PC-3 (cell line): ENCODE measurements at regions of chr7 and their contacts with region 1.

Region 1: GRCh38 chr7:157412021-157412443 is 75.2 kb downstream of the DNAJB6 start:
- DNase-seq: peak; percentile 95
- ATAC-seq: peak; percentile 82
- H3K4me3 ChIP-seq: peak overlapping the region; percentile 24; the same call in 1 of the 2 replicates
- H3K27ac ChIP-seq: peak overlapping the region; percentile 99
- H3K4me1 ChIP-seq: peaks cover 33% of the 10 kb centered on the region
- H3K27me3 ChIP-seq: no peaks in the 10 kb centered on the region
- CTCF ChIP-seq: no peak

Region 2: DNA sequence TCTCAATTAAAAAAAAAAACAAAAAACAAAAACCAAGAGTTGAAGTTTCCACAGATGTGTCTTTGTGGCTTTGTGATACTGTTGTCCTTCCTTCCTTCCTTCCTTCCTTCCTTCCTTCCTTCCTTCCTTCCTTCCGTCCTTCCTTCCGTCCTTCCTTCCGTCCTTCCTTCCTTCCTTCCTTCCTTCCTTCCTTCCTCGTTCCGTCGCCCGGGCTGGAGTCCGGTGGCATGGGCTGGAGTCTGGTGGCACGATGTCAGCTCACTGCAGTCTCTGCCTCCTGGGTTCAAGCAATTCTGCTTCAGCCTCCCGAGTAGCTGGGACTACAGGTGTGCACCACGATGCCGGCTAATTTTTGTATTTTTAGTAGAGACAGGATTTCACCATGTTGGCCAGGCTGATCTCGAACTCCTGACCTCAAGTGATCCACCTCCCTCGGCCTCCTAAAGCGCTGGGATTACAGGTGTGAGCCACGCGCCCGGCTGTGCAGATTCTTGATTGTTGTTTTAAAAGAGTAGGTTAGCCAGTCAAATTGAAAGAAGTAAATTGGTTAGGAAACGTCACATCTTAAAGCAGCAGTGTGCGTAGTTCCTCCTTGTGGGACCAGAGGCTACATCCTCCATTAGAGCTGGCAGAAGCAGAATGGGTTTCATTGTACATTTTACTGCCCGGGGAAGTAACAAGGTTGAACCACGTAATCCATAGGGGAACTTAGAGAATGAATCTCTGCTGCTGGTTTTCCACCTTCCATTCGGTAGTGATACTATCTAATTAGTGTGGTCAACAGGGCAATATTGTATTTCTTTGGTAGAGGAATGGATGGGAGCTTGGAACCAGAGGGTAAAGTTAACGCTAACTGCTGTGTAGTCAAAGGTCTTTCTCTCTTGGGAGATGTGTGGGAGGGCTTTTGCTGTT is 54.6 kb before region 1 on chr7:
- CTCF ChIA-PET with region 1: no interaction called
- POLR2A ChIA-PET with region 1: no interaction called
- intact Hi-C with region 1: no loop called
- DNase-seq: no peak
- ATAC-seq: no peak
- H3K4me3 ChIP-seq: no peak overlapping the region
- H3K27ac ChIP-seq: no peak overlapping the region
- H3K4me1 ChIP-seq: peaks cover 13% of the 10 kb centered on the region
- H3K27me3 ChIP-seq: no peaks in the 10 kb centered on the region
- CTCF ChIP-seq: no peak

Region 3: DNA sequence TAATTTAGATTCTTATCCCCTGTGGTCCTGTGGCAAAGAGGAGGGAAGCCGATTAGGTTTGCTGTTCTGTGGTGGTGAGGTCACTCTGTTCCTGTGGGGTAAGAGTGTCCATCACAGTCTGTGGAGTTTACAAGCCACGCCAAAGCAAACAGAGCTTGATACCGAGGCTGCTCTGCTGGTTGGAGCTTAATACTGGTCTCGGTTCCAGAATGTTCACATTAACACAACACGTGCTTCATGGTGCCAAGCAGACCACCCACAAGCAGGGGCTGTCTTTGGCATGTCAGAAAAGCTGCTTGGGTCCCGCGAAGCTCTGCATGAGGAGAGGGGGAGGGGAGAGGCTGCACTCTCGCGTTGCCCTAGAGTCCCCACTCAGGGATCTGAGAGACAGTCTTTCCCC is 27.7 kb before region 1 on chr7:
- CTCF ChIA-PET with region 1: no interaction called
- POLR2A ChIA-PET with region 1: no interaction called
- intact Hi-C with region 1: loop called (anchors 1 kb)
- DNase-seq: peak; percentile 74
- ATAC-seq: peak; percentile 96
- H3K4me3 ChIP-seq: no peak overlapping the region
- H3K27ac ChIP-seq: peak overlapping the region; percentile 85
- H3K4me1 ChIP-seq: peaks cover 30% of the 10 kb centered on the region
- H3K27me3 ChIP-seq: no peaks in the 10 kb centered on the region
- CTCF ChIP-seq: no peak

Region 4: GRCh38 chr7:157397731-157398691 is 14.0 kb before region 1 on chr7:
- CTCF ChIA-PET with region 1: no interaction called
- POLR2A ChIA-PET with region 1: no interaction called
- intact Hi-C with region 1: loop called (anchors 1 kb)
- DNase-seq: peak; percentile 65
- ATAC-seq: peak; percentile 72
- H3K4me3 ChIP-seq: no peak overlapping the region
- H3K27ac ChIP-seq: peak overlapping the region; percentile 38
- H3K4me1 ChIP-seq: peaks cover 25% of the 10 kb centered on the region
- H3K27me3 ChIP-seq: no peaks in the 10 kb centered on the region
- CTCF ChIP-seq: peak; percentile 65

Region 5: GRCh38 chr7:157555313-157555712 is 143.3 kb after region 1 on chr7:
- CTCF ChIA-PET with region 1: no interaction called
- POLR2A ChIA-PET with region 1: no interaction called
- intact Hi-C with region 1: loop called (anchors 5 kb)
- DNase-seq: peak; percentile 94
- ATAC-seq: peak; percentile 97
- H3K4me3 ChIP-seq: peak overlapping the region; percentile 43; the same call in 1 of the 2 replicates
- H3K27ac ChIP-seq: peak overlapping the region; percentile 100
- H3K4me1 ChIP-seq: peaks cover 31% of the 10 kb centered on the region
- H3K27me3 ChIP-seq: no peaks in the 10 kb centered on the region
- CTCF ChIP-seq: no peak

Region 6: DNA sequence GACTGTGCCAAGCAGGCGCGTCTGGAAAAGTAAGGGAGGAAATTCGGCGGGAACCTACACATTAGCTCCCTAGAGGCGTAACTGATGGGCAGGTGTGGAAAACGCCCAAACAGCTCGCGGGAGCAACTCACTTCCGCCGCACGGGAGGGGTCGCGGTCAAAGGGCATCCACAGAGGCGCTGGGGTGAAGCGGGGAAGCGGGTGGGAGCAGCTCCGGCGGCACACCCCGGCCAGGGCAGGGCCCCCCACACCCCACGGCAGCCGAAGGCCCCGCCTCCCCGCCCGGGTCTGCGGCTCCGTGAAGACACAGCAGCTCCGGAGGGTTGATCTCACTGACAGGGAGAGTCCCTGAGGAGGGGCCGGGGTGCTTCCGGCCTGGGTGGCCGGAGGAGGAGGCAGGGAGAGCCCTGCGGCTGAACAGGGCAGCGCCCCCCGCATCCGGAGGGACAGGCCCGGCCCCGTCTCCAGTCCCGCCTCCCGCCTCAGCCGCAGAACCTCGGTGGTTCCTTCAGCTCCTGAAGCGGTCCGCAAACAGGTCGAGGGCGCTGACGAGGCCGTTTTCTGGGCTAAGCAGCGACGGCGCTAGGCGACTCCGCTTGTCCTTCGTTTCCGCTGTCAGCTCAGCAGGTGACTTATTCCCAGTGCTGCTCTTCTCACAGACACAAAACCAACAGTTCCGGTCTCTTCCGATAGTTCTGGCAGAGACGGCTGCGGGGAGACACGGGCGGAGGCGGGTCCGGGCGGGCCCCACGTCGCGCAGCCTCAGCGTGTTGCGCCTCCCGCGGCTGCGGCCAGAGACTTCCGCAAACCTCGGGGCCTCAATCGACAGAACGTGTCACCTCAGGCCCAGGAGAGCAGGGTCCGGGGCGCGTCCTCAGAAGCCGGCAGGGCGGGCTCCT is 200.9 kb after region 1 on chr7:
- CTCF ChIA-PET with region 1: no interaction called
- POLR2A ChIA-PET with region 1: no interaction called
- intact Hi-C with region 1: loop called (anchors 5 kb)
- DNase-seq: peak; percentile 47
- ATAC-seq: peak; percentile 65
- H3K4me3 ChIP-seq: peak overlapping the region; percentile 62
- H3K27ac ChIP-seq: peak overlapping the region; percentile 38
- H3K4me1 ChIP-seq: peaks cover 14% of the 10 kb centered on the region
- H3K27me3 ChIP-seq: no peaks in the 10 kb centered on the region
- CTCF ChIP-seq: no peak; the same call in 1 of the 2 replicates